ENCODE measurements at regions of chr3 and their contacts with region 1.

Region 1: GRCh38 chr3:137110484-137110883 is 152.7 kb downstream of the IL20RB start:
- DNase-seq: peak; percentile 56
- H3K4me3 ChIP-seq: no peak overlapping the region; a peak in 1 of 4 replicates
- H3K27ac ChIP-seq: no peak overlapping the region
- H3K4me1 ChIP-seq: no peaks in the 10 kb centered on the region
- H3K27me3 ChIP-seq: no peaks in the 10 kb centered on the region
- CTCF ChIP-seq: peak; percentile 66
- EP300 ChIP-seq: no peak
- RAD21 ChIP-seq: peak; percentile 79

Region 2: DNA sequence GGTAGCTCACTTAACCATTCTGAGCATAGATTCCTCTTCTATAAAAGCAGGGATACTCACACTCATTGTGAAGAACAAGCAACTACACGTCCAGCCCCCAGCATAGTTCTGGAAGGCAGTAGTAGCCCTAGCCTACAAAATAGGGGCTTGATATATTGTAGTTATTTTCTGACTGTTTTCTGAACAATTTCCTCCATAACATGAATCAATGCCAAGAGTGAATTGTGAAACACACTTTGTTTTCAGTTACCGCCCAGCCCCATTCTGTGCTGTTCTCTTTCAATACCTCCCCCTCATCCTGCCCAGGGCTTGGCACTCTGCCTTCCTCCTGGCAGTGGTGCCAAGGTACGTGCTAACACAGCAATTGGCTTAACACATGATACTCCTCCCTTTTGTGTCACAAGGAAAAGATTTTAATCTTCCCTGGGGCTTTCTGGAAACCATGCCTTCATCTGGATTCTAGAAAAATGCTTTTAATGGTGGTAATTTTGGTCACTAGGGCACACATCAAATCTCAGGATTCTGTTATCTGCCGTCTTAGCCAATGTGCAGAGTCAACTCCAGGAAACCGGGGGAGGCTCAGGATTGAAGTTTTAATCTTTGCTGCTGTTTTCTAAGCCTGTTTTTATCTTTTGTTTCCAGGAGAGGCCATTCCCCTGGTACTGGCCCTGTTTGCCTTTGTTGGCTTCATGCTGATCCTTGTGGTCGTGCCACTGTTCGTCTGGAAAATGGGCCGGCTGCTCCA is 115.5 kb before region 1 on chr3:
- CTCF ChIA-PET with region 1: no interaction called
- POLR2A ChIA-PET with region 1: no interaction called
- DNase-seq: peak; percentile 32
- H3K4me3 ChIP-seq: no peak overlapping the region
- H3K27ac ChIP-seq: peak overlapping the region in 1 of 2 experiments; percentile 35; a peak in 1 of 4 replicates
- H3K4me1 ChIP-seq: peaks cover 10 to 13% of the 10 kb centered on the region in 2 experiments; a peak in 2 of 4 replicates
- H3K27me3 ChIP-seq: no peaks in the 10 kb centered on the region
- CTCF ChIP-seq: no peak
- EP300 ChIP-seq: no peak; a peak in 1 of 4 replicates
- RAD21 ChIP-seq: no peak

Region 3: GRCh38 chr3:137099364-137100219 is 10.9 kb before region 1 on chr3:
- CTCF ChIA-PET with region 1: interaction called, 27 read pairs
- POLR2A ChIA-PET with region 1: no interaction called
- DNase-seq: no peak
- H3K4me3 ChIP-seq: no peak overlapping the region
- H3K27ac ChIP-seq: no peak overlapping the region
- H3K4me1 ChIP-seq: no peaks in the 10 kb centered on the region
- H3K27me3 ChIP-seq: no peaks in the 10 kb centered on the region
- CTCF ChIP-seq: no peak
- EP300 ChIP-seq: no peak
- RAD21 ChIP-seq: no peak

Region 4: DNA sequence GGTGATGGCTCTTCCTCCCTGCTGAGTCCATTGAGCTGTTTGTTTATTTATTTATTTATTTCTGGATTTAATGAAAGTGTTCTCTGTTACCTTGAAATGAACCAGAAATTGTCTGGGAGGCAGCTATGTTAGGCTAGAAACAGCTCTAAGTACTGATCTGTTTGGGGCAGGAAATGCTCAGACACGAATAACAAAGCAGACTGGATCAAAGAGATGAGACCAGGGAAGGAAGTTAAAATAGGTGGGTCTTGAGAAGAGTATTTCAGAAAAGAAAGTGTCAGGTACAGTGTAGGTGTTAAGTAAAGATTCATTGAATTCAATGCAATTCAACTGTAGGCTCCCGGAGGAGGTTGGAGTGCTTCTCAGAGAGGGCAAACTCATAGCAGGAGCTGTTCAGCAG is 20.6 kb after region 1 on chr3:
- CTCF ChIA-PET with region 1: interaction called, 14 read pairs
- POLR2A ChIA-PET with region 1: no interaction called
- DNase-seq: no peak
- H3K4me3 ChIP-seq: no peak overlapping the region
- H3K27ac ChIP-seq: no peak overlapping the region
- H3K4me1 ChIP-seq: no peaks in the 10 kb centered on the region
- H3K27me3 ChIP-seq: no peaks in the 10 kb centered on the region
- CTCF ChIP-seq: no peak
- EP300 ChIP-seq: no peak
- RAD21 ChIP-seq: no peak

Region 5: DNA sequence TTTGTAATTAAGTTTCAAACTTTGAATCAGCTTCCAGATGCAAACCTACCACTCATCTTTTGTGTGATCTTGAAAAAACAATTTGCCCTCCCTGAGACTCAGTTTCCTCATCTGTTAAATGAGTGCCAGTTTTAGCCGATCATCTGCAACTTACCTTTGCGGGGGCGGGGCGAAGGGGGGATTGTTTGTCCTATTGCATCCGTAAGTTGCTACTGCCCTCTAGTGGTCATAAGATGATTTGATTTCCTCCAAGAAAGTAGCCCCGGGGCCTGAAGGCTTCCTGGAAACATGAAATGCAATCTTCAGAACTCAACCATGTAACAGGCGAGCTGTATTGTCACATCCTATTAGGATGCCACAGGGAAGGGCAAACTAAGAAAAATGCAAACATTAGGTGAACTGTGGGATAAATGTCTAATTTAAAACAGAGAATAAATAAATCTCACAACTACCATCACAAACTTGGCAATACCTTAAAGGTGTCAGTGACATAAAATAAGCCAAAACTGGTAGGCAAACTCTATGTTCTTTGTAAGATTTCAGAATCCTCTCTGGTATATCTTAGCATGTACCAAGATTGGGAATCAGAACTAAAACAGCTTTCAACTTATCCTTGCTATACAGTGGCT is 836.0 kb after region 1 on chr3:
- CTCF ChIA-PET with region 1: interaction called, 70 read pairs
- POLR2A ChIA-PET with region 1: no interaction called
- DNase-seq: peak; percentile 59
- H3K4me3 ChIP-seq: peak overlapping the region in 1 of 2 experiments; percentile 24; a peak in 1 of 4 replicates
- H3K27ac ChIP-seq: no peak overlapping the region
- H3K4me1 ChIP-seq: no peaks in the 10 kb centered on the region
- H3K27me3 ChIP-seq: no peaks in the 10 kb centered on the region
- CTCF ChIP-seq: peak; percentile 86
- EP300 ChIP-seq: no peak
- RAD21 ChIP-seq: peak; percentile 80

Region 6: DNA sequence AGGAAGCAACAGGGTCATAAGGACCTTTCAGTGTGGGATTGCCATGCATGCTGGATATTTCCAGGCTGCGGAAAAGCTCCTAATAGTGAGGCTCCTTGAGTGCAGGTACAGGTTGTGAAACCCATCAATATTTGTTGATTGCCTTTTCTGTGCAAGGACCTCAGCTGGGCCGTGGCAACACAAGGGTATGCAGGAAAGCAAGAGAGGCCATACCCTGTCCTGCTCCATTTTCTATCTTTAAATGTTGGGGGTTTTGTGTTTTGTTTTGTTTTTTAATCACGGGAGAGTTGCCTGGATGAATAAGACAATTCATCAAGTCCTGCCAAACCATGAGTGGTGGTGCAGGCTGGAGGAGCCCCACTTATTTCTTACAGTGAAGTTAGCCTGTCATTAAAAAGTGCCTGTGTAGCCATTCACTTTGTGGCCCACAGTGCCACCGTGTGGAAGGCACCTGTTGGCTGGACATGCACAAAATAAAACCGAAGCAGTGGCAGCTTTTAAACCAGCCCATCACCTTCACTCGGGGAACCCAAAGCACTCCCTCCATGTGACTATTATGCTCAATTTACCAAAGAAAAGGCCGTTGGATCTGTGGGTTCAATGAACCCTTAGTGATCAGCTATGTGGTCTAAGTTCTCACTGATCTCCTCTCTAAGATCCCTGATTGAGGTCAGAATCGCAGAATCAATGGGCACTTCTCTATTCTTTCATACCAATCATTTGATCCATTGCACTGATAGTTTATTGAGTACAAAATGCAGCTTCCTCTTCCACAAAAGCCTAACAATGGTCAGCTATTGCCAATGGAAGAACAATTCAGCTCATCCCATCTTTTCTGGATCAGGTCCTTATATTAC is 941.7 kb after region 1 on chr3:
- CTCF ChIA-PET with region 1: interaction called, 19 read pairs
- POLR2A ChIA-PET with region 1: no interaction called
- DNase-seq: peak; percentile 34
- H3K4me3 ChIP-seq: no peak overlapping the region
- H3K27ac ChIP-seq: no peak overlapping the region
- H3K4me1 ChIP-seq: no peaks in the 10 kb centered on the region; a peak in 1 of 4 replicates
- H3K27me3 ChIP-seq: no peaks in the 10 kb centered on the region
- CTCF ChIP-seq: peak; percentile 72
- EP300 ChIP-seq: no peak
- RAD21 ChIP-seq: peak; percentile 70